PC-9 (cell line): ENCODE measurements at regions of chr3 and their contacts with region 1.

Region 1: DNA sequence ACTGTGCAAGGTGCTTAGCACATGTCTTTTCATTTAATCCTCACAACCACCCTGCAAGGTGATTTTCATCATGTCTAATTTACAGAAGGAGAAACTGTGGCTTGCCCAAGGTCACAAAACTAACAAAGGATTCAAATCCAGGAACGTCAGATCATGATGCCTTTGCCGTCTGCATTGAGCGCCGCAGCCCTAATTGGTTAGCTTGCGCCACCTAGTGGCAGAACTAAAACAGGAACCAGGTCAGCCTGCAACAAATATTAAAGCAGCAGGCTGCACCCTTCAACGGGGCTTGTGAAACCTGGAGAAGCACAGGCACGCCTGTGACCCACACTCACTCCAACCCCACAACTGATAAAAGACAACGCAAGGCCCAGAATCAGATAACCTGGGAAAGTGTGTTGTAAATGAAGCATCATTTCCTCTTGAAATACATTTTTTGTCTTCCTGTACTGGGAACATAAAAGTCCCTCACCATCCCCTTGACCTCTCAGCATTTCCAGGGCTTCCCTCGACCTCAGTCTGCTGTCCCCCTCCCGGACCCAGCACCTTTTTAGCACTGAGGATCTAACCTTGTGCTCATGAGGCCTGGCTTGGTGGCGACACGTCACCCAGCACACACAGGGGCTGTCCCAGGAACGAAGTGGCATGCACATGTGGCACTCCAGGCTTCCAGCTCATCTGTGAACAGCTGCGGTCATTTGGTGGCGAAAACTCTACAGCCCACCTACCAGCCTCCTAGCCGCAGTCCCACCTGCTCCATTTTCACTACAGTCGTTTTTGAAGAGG is 17.3 kb downstream of the DPH3 start:
- DNase-seq: peak; percentile 57 to 72
- H3K4me3 ChIP-seq: no peak overlapping the region
- H3K27ac ChIP-seq: no peak overlapping the region
- H3K4me1 ChIP-seq: no peaks in the 10 kb centered on the region
- H3K27me3 ChIP-seq: no peaks in the 10 kb centered on the region
- CTCF ChIP-seq: peak; percentile 98

Region 2: GRCh38 chr3:14921078-14921616 is 1326.3 kb before region 1 on chr3:
- CTCF ChIA-PET with region 1: no interaction called
- POLR2A ChIA-PET with region 1: no interaction called
- intact Hi-C with region 1: loop called (anchors 5 kb)
- DNase-seq: peak; percentile 68 to 83
- H3K4me3 ChIP-seq: no peak overlapping the region
- H3K27ac ChIP-seq: no peak overlapping the region
- H3K4me1 ChIP-seq: no peaks in the 10 kb centered on the region
- H3K27me3 ChIP-seq: no peaks in the 10 kb centered on the region
- CTCF ChIP-seq: peak; percentile 98

Region 3: GRCh38 chr3:15205934-15206661 is 1041.4 kb before region 1 on chr3 and contains the start of gene CAPN7:
- CTCF ChIA-PET with region 1: no interaction called
- POLR2A ChIA-PET with region 1: no interaction called
- intact Hi-C with region 1: loop called (anchors 2 kb)
- DNase-seq: peak; percentile 72 to 95
- H3K4me3 ChIP-seq: peak within 1 kb of the TSS; percentile 98
- H3K27ac ChIP-seq: peak within 1 kb of the TSS; percentile 50
- H3K4me1 ChIP-seq: peaks cover 19% of the 10 kb centered on the region
- H3K27me3 ChIP-seq: no peaks in the 10 kb centered on the region
- CTCF ChIP-seq: no peak
- total RNA-seq, gene CAPN7: 28.5 and 29.5 TPM in 2 replicates

Region 4: DNA sequence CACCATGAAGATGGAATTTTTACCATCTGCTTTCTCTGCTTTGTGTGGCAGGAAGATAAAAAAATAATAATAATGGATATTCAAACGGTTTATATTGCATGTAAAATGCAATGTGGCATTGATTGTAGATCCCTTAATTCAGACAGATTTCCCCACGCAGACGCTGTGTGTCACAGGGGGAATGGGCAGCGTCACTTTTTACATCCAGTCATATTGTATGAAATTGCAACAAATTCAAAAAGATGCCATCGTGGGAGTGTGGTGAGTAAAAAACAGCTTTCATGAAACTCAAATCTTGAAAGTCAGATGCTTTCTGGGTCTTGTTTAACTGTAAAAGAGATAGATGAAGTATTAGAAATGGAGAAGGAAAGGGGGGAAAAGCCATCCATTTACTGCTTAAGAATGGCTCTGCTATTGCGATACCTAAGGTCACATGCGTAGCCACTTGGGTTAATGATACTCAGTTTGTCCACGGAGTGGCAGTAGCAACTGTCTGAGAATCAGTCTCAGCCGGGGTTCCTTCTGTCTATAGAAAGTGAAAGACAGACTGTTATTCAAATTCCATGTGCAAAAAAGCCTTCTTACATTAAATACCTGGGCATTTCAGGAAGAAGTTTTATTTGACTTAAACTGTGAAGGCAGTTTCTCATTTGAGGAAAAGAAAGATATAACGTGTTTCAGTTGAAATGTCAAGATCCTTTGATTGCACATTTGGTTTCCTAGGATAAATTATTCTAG is 617.4 kb before region 1 on chr3:
- CTCF ChIA-PET with region 1: no interaction called
- POLR2A ChIA-PET with region 1: interaction called, 5 read pairs
- intact Hi-C with region 1: loop called (anchors 10 kb)
- DNase-seq: peak; percentile 57 to 60
- H3K4me3 ChIP-seq: peak overlapping the region; percentile 15; the same call in 1 of the 2 replicates
- H3K27ac ChIP-seq: peak overlapping the region; percentile 79
- H3K4me1 ChIP-seq: peaks cover 54% of the 10 kb centered on the region
- H3K27me3 ChIP-seq: no peaks in the 10 kb centered on the region
- CTCF ChIP-seq: peak; percentile 79

Region 5: DNA sequence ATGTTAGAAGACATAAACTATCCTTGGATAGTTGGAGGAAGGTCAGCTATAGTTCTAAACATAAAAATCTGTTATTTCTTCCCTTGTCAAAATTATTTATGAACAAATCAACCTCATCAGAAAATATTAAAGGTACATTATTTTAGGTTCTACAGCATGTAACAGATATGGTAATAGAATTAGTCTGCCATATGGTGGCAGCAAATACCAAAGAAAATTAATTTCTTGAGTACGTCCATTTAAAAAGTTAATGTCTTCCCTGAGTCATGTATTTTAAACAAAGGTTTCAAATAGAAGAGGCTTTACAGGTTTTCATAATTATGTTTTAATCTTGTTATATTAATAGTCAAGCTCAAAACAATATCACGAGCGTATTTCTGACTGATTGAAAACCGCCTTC is 431.8 kb before region 1 on chr3:
- CTCF ChIA-PET with region 1: no interaction called
- POLR2A ChIA-PET with region 1: no interaction called
- intact Hi-C with region 1: loop called (anchors 1 kb)
- DNase-seq: peak in 1 of 2 experiments; percentile 35
- H3K4me3 ChIP-seq: no peak overlapping the region
- H3K27ac ChIP-seq: no peak overlapping the region
- H3K4me1 ChIP-seq: no peaks in the 10 kb centered on the region
- H3K27me3 ChIP-seq: no peaks in the 10 kb centered on the region
- CTCF ChIP-seq: peak; percentile 68

Region 6: DNA sequence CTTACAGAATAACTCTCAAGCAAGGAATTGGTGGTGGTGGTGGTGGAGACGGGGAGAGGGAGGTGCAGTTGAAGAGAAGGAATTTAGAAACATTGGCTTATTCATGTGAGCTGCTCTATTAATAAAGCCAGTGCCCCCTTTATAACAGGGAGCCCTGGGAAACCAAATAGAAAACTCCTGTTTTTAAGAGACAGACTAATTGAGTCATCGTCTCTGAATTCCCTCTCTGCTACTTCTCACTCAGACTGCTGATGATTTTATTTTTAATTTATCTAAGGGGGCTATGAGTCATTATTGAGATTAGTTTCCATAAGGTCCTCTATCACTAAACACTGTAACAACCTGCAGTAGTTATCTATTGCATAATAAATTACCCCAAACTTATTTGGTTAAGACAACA is 218.9 kb before region 1 on chr3:
- CTCF ChIA-PET with region 1: no interaction called
- POLR2A ChIA-PET with region 1: no interaction called
- intact Hi-C with region 1: no loop called
- DNase-seq: no peak
- H3K4me3 ChIP-seq: no peak overlapping the region
- H3K27ac ChIP-seq: no peak overlapping the region
- H3K4me1 ChIP-seq: no peaks in the 10 kb centered on the region
- H3K27me3 ChIP-seq: no peaks in the 10 kb centered on the region
- CTCF ChIP-seq: no peak

Region 7: DNA sequence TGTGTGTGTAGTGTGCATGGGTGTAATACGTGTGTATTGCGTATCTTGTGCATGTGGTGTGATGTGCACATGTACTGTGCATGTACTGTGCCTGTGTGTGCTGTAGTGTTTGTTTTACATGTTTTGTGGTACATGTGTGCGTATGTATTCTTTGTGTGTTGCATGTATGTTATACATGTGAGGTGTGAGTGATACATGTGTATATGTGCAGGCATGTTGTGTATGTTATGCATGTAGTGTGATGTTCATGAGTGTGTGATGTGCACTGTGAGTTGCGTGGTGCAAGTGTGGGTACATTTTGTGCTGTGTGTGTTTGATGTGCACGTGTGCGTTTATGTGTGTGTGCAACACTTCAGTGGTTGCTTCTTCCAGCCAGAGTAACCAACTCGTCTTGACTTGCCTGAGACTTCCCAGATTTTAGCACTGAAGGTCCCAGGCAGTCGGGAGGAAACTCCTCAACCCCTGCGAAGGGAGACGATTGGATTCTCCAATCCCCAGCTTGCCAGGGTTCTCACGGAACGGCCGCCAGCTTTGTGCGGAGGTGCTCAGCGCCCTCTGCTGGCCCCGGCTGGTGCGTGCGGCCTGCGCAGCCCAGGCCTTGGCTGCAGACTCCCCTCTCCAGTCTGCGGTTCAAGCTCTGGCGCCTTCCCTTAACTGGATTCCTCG is 69.4 kb before region 1 on chr3:
- CTCF ChIA-PET with region 1: interaction called, 7 read pairs
- POLR2A ChIA-PET with region 1: no interaction called
- intact Hi-C with region 1: loop called (anchors 1 kb)
- DNase-seq: peak in 1 of 2 experiments; percentile 67
- H3K4me3 ChIP-seq: no peak overlapping the region
- H3K27ac ChIP-seq: no peak overlapping the region
- H3K4me1 ChIP-seq: no peaks in the 10 kb centered on the region
- H3K27me3 ChIP-seq: peaks cover 18% of the 10 kb centered on the region; the same call in 1 of the 2 replicates
- CTCF ChIP-seq: peak; percentile 95

Region 8: GRCh38 chr3:16211176-16211904 is 36.1 kb before region 1 on chr3:
- CTCF ChIA-PET with region 1: no interaction called
- POLR2A ChIA-PET with region 1: no interaction called
- intact Hi-C with region 1: loop called (anchors 2 kb)
- DNase-seq: no peak
- H3K4me3 ChIP-seq: no peak overlapping the region
- H3K27ac ChIP-seq: no peak overlapping the region
- H3K4me1 ChIP-seq: no peaks in the 10 kb centered on the region
- H3K27me3 ChIP-seq: no peaks in the 10 kb centered on the region
- CTCF ChIP-seq: no peak